PC-9 (cell line): ENCODE measurements at regions of chr10 and their contacts with region 1.

Region 1: DNA sequence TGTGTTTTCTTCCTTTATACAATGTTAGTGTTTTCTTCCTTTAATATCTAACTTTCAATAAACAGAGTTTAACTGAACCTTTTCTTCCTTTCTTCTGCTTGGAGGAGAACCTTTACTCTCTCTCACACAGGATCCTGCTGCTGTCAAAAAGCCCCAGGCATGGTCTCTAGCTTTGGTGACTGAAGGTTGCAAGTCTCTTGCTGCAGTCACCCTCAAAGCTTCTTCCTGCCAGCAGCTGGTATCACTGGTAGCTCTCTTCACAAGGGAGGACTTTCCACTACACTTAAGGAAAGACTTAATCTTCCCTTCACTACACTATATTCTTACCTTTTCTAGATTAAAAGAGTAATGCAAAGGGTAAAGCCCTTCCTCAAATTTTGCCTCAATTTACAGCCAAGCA is 153.4 kb downstream of the SGMS1 start:
- DNase-seq: peak in 1 of 2 experiments; percentile 66
- H3K4me3 ChIP-seq: peak overlapping the region; percentile 12; the same call in 1 of the 2 replicates
- H3K27ac ChIP-seq: peak overlapping the region; percentile 95
- H3K4me1 ChIP-seq: peaks cover 53% of the 10 kb centered on the region
- H3K27me3 ChIP-seq: no peaks in the 10 kb centered on the region
- CTCF ChIP-seq: no peak

Region 2: DNA sequence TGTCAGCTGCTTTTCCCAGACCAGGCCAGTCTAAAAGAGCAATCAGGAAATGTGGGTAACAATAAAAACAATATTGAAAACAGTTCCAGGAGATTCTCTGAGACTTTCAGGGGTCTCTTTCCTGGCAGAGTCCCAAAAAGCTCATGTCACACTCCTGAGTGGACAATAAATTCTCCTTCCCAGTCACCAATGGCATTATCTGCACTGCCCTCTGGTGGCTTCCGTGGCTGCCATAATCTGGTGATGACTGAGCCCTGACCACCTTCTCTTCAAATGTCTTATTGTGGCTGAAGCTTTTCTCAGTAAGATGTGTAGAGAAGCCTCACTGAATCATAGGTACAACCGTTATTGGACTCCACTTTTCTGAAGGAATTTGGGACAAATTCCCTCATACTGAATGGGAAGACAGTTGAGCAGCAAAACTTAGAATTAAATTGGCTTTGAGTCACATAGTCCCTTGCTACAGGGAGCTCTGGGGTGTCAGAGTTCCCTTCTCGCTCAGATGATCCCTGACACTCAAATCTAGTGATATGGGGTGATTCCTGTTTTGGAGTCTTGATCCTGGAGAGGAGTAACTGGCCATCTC is 194.6 kb before region 1 on chr10:
- CTCF ChIA-PET with region 1: no interaction called
- POLR2A ChIA-PET with region 1: no interaction called
- intact Hi-C with region 1: loop called (anchors 5 kb)
- DNase-seq: peak; percentile 31 to 38
- H3K4me3 ChIP-seq: no peak overlapping the region
- H3K27ac ChIP-seq: no peak overlapping the region
- H3K4me1 ChIP-seq: peaks cover 11% of the 10 kb centered on the region; the same call in 1 of the 2 replicates
- H3K27me3 ChIP-seq: no peaks in the 10 kb centered on the region
- CTCF ChIP-seq: peak; percentile 75

Region 3: GRCh38 chr10:50367732-50368131 is 102.6 kb before region 1 on chr10:
- CTCF ChIA-PET with region 1: no interaction called
- POLR2A ChIA-PET with region 1: no interaction called
- intact Hi-C with region 1: loop called (anchors 5 kb)
- DNase-seq: peak in 1 of 2 experiments; percentile 24
- H3K4me3 ChIP-seq: no peak overlapping the region
- H3K27ac ChIP-seq: no peak overlapping the region
- H3K4me1 ChIP-seq: peaks cover 17% of the 10 kb centered on the region
- H3K27me3 ChIP-seq: no peaks in the 10 kb centered on the region
- CTCF ChIP-seq: peak; percentile 61

Region 4: GRCh38 chr10:50417886-50418830 is 52.2 kb before region 1 on chr10:
- CTCF ChIA-PET with region 1: interaction called, 3 read pairs
- POLR2A ChIA-PET with region 1: interaction called, 5 read pairs
- intact Hi-C with region 1: loop called (anchors 2 kb)
- DNase-seq: peak; percentile 89 to 94
- H3K4me3 ChIP-seq: peak overlapping the region; percentile 96
- H3K27ac ChIP-seq: peak overlapping the region; percentile 92
- H3K4me1 ChIP-seq: peaks cover 53% of the 10 kb centered on the region
- H3K27me3 ChIP-seq: no peaks in the 10 kb centered on the region
- CTCF ChIP-seq: no peak

Region 5: GRCh38 chr10:50511492-50512213 is 41.3 kb after region 1 on chr10:
- CTCF ChIA-PET with region 1: no interaction called
- POLR2A ChIA-PET with region 1: no interaction called
- intact Hi-C with region 1: loop called (anchors 1 kb)
- DNase-seq: peak; percentile 43 to 98
- H3K4me3 ChIP-seq: no peak overlapping the region
- H3K27ac ChIP-seq: peak overlapping the region; percentile 95
- H3K4me1 ChIP-seq: peaks cover 46% of the 10 kb centered on the region
- H3K27me3 ChIP-seq: no peaks in the 10 kb centered on the region
- CTCF ChIP-seq: no peak

Region 6: DNA sequence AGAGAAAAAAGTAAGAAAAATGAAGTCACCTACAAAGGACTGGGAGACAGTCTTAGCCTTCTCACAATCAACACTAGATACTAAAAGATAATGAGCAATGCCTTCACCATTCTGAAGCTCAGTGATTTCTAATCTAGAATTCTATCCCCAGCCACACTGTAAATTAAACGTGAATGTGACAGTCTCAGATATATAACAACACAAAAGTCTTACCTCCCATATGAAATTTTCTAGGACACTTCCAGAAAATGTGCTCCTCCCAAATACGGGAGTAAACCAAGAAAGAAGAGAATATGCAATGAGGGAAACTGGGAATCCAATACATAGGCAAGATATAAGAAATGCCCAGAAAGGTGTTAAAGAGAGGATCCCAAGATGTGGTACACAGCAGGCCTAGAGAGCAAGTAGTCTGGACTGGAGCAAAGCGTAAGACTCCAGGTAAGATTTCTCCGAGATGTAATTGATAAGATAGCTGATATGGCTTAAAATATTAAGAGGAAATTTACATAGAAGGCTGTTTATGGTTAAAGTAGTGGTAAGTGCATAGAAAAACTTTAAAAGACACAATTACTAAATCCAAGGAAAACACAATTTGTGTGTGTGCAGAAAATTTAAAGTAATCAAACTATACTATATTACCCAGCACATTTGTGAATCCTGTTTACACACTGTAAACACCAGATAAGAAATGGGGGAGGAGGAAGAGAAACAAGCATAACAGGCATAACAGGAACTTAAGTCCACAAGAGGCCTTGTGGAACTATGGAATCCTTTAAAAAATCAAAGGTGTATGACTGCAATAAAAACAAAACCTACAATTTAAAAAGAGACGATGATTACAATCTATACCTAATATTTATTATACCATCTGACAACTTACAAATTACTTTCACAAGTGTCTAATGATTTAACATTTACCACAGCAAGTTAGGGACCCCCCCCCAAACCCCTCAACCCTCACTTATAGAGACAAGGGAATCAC is 109.4 kb after region 1 on chr10:
- CTCF ChIA-PET with region 1: no interaction called
- POLR2A ChIA-PET with region 1: no interaction called
- intact Hi-C with region 1: loop called (anchors 1 kb)
- DNase-seq: peak in 1 of 2 experiments; percentile 96
- H3K4me3 ChIP-seq: peak overlapping the region; percentile 42
- H3K27ac ChIP-seq: peak overlapping the region; percentile 84
- H3K4me1 ChIP-seq: peaks cover 81% of the 10 kb centered on the region
- H3K27me3 ChIP-seq: no peaks in the 10 kb centered on the region
- CTCF ChIP-seq: no peak

Region 7: GRCh38 chr10:50605269-50606263 is 135.2 kb after region 1 on chr10:
- CTCF ChIA-PET with region 1: no interaction called
- POLR2A ChIA-PET with region 1: no interaction called
- intact Hi-C with region 1: loop called (anchors 1 kb)
- DNase-seq: peak; percentile 60 to 92
- H3K4me3 ChIP-seq: no peak overlapping the region; the same call in 1 of the 2 replicates
- H3K27ac ChIP-seq: peak overlapping the region; percentile 53
- H3K4me1 ChIP-seq: peaks cover 45% of the 10 kb centered on the region
- H3K27me3 ChIP-seq: no peaks in the 10 kb centered on the region
- CTCF ChIP-seq: no peak